ENCODE measurements at regions of chr22 and their contacts with region 1.

Region 1: DNA sequence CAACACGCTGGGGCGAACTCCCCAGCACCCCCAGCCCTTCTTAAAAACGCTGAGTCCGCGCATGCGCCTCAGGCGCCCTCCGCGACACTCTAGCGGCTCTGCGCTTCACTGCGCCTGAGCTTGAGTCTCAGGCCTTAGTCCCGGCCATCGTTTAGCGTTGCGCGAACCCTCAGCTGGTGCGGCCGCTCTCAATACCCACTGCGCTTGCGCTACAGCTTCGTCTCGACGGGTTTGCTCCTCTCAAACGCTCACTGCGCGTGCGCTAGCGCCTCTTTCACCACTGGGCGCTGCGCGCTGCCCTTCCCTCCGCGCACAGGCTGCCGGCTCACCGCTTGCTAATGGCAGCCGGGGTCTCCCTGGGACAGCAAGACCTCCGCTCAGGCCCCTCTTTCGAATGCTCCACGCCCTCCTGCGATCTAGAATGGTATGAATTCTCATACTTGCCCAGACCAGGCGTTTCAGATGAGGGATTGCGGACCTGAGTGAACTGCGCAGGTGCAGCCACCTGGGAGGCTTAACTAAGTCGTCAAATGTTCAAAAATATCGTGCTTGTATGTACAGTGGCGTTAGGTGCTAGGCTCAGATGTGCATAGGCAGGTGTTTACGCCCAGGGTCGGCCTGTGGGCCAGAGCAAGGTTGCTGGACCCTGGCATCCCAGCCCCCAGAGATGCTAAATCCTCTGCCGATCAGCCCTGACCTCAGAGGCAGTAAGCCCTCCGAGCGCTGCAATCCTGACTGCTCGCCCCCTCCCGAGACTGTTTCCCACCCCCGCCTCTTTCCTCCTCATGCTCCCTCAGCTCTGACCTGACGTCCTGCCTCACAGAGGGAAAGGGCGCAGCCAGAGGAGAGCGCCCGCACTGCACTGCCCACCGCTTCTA is at the start of gene SLC2A11:
- DNase-seq: peak; percentile 99

Region 2: GRCh38 chr22:23767673-23768548 is 89.9 kb before region 1 on chr22 and contains the start of gene CHCHD10:
- CTCF ChIA-PET with region 1: interaction called, 3 read pairs
- POLR2A ChIA-PET with region 1: interaction called, 18 read pairs
- DNase-seq: peak; percentile 92

Region 3: GRCh38 chr22:23786752-23787599 is 70.9 kb before region 1 on chr22 and contains the start of gene SMARCB1:
- CTCF ChIA-PET with region 1: no interaction called
- POLR2A ChIA-PET with region 1: interaction called, 10 read pairs
- DNase-seq: peak; percentile 98

Region 4: GRCh38 chr22:23838681-23839468 is 19.0 kb before region 1 on chr22 and contains the start of gene DERL3:
- CTCF ChIA-PET with region 1: interaction called, 7 read pairs
- POLR2A ChIA-PET with region 1: interaction called, 13 read pairs
- DNase-seq: peak; percentile 96

Region 5: DNA sequence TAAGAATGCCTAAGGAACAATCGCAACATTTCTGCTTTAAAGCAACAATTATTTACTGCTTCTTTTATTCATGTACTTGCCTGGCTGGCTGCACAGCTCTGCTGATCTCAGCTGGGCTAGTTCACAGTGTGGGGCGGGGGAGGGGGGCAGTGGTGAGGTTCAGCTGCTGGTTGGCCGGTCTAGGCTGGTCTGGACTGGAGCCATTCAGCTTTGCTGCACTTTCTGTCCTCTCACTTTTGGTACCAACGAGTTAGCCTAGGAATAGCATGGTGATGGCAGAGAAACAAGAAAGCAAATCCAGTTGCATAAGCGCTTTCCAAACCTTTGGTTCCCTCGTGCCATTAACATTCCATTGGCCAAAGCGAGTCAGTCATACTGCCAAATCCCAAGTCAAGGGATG is 20.4 kb after region 1 on chr22:
- CTCF ChIA-PET with region 1: interaction called, 4 read pairs
- POLR2A ChIA-PET with region 1: interaction called, 16 read pairs
- DNase-seq: no peak

Region 6: DNA sequence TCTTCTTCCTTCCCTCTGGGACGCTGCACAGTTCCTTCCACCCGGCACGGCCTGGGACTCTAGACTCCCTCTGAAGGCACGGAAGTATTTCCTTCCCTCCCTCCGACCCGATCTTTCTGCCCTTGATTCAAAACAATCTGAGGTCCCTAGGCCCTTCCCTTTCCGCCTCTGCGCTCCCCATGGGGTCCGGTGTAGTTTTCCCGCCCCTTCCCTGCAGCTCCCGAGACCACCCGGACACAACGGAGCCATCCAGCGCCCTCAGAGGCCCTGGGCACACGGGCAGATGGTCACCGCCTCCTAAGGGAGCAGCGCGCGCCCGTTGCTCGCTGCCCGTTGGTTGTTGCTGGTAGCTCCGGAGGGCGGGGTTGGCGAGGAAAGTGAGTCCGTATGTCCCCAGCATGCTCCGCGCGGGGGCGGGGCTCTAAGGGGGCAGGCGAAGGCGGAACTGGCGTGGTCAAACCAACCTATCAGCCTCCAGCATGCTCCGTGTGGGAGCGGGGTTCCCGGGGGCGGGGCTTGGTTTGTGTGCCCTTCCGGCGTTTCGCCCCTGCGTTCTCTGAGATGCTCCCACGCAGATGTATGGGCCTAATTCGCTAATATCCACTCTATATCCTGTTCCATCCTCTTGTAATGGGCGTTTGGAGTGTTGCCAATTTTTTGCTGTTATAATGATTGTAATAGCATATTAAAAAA is 56.0 kb after region 1 on chr22:
- CTCF ChIA-PET with region 1: interaction called, 4 read pairs
- POLR2A ChIA-PET with region 1: interaction called, 35 read pairs
- DNase-seq: peak; percentile 100